ENCODE measurements at regions of chr2 and their contacts with region 1.

Region 1: DNA sequence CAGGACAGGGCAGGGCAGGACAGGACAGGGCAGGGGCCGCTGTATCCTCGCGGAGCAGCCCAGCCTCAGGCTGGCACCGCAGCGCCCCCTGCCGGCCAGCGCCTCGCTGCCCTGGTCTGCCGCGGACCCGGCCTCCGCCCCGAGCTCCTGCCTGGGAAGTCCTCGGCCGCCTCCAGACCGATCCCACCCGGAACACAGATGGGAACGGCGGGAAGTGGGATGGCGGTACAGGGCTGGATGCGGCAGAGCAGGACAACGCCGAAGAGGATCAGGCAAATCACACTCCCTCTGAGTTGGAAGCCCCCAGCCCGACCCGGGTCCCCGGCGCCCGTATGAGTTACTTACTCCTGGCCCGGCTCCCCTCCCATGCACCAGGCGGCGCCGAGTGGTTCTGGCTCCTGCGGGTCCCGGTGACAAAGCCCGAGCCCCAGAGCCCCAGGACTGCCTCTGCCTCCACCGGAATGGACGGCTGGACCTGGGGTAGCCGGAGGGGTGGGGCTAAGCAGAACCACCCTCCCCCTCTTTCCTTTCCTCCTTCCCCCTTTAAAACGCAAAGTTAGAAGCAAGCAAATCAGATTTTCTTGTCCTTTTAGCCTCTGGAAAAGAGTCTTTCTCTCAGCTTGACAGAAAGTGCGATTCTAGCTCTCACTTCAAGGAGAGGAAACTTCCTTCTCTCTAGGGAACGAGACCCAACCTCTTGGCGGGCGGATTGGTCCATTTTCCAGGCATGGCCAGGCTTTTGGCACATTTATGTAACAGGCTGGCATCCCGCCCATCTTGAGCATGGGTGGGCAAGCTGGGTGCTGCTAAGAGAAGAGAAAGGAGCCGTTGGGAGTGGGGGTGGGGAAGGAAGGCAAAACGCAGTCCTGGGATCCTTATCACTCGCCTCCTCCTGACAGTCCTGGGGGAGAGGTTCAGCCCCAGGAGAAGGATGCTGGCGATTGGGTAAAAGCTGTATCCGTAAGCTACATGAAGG is at the start of gene TP53I3:
- DNase-seq: peak; percentile 79 to 98
- H3K4me3 ChIP-seq: peak within 1 kb of the TSS; percentile 41
- CTCF ChIP-seq: peak in 2 of 3 donors; percentile 4 to 75
- POLR2A ChIP-seq: no peak
- total RNA-seq, gene TP53I3: 5.0 to 17.9 (median 8.5) TPM

Region 2: GRCh38 chr2:23824777-23825212 is 259.9 kb before region 1 on chr2:
- intact Hi-C with region 1: loop called (anchors 10 kb)
- DNase-seq: no peak
- H3K4me3 ChIP-seq: no peak overlapping the region
- CTCF ChIP-seq: no peak
- POLR2A ChIP-seq: no peak

Region 3: DNA sequence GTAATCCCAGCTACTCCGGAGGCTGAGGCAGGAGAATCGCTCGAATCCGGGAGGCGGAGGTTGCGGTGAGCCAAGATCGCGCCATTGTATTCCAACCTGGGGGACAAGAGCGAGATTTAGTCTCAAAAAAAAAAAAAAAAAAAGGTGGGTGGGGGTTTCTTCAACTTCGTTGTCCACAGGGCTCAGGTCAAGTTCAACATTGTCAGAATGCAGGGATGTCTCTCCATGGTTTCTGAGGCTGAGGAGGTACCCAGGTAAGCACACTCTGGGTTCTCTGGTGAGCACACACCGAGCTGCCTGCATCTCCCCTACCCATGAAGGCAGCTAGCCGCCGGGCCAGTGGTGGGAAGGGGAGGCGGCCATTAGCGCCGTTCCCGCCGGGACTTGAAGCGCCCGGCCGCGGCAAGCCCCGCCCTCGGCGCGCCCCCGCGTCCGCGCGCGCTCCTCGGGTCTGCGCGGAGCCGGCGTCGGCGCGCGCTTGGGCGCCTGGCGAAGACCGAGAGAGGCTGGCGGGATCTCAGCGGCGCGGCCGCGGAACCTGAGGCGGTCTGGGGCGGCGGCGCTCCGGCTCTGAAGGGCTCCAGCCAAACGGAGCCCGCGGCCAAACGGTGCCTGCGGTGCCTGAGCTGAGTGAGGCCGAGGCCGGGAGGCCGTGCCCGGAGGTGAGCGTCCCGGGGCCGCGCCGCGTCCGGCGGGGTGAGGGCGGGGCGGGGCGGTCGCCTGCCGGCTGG is 144.5 kb before region 1 on chr2 and contains the start of gene UBXN2A:
- intact Hi-C with region 1: loop called (anchors 10 kb)
- DNase-seq: peak; percentile 47 to 92
- H3K4me3 ChIP-seq: peak within 1 kb of the TSS; percentile 94
- CTCF ChIP-seq: no peak
- POLR2A ChIP-seq: peak in 1 of 2 donors; percentile 33
- total RNA-seq, gene UBXN2A: 8.5 to 15.0 (median 12.9) TPM

Region 4: DNA sequence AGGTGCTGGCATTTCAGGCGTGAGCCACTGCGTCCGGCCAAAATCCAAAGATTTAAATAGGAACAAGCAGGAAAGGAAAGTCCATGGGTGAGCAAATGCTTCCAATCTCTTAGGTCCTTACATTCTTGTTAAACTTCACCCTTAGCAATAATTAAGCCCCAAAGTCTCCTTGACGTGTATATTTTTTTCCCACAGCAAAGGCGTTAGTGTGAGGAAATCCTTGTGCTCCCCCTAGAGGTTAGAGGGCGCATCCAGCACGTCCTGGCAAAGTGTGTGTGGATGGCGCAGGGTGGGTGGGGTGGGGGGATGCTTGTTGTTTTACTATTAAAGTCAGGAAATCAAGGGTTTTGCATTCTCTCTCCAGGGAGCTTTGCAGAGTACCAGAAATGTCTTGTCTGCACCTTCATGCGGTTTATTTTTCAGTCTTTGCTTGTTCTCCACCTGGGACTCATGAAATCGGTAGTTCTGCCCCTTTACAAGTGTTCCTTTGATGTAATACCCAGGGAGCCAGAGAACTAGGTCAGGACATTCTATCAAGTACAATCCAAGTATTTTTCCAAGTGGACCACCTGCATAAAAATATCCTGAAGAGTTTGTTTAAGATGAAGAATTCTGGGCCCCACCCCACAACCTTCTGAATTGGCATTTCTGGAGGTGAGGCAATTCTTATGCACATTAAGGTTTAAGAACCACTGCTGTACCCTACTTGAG is 297.8 kb after region 1 on chr2:
- intact Hi-C with region 1: no loop called
- DNase-seq: peak; percentile 38 to 85
- H3K4me3 ChIP-seq: no peak overlapping the region
- CTCF ChIP-seq: no peak
- POLR2A ChIP-seq: no peak